ENCODE measurements at regions of chr1 and their contacts with region 1.

Region 1: GRCh38 chr1:156751758-156752757 is 583 bp upstream of the HDGF start:
- DNase-seq: peak; percentile 93
- H3K4me3 Mint-ChIP-seq: peak overlapping the region; percentile 97
- H3K27ac Mint-ChIP-seq: peak overlapping the region; percentile 92
- H3K4me1 Mint-ChIP-seq: peaks cover 32% of the 10 kb centered on the region
- H3K27me3 Mint-ChIP-seq: no peaks in the 10 kb centered on the region

Region 2: GRCh38 chr1:156740679-156741612 is 11.1 kb before region 1 on chr1 and contains the start of gene MRPL24:
- intact Hi-C with region 1: loop called (anchors 1 kb)
- DNase-seq: peak; percentile 97
- H3K4me3 Mint-ChIP-seq: peak within 1 kb of the TSS; percentile 95
- H3K27ac Mint-ChIP-seq: peak within 1 kb of the TSS; percentile 92
- H3K4me1 Mint-ChIP-seq: peaks cover 29% of the 10 kb centered on the region
- H3K27me3 Mint-ChIP-seq: no peaks in the 10 kb centered on the region
- total RNA-seq, gene MRPL24: 116 and 124 TPM in 2 replicates